Posterior vena cava (tissue), 2 donors: ENCODE measurements at regions of chr20 and their contacts with region 1.

Region 1: GRCh38 chr20:48473838-48474416 is 353.9 kb downstream of the PREX1 start:
- DNase-seq: peak; percentile 63

Region 2: DNA sequence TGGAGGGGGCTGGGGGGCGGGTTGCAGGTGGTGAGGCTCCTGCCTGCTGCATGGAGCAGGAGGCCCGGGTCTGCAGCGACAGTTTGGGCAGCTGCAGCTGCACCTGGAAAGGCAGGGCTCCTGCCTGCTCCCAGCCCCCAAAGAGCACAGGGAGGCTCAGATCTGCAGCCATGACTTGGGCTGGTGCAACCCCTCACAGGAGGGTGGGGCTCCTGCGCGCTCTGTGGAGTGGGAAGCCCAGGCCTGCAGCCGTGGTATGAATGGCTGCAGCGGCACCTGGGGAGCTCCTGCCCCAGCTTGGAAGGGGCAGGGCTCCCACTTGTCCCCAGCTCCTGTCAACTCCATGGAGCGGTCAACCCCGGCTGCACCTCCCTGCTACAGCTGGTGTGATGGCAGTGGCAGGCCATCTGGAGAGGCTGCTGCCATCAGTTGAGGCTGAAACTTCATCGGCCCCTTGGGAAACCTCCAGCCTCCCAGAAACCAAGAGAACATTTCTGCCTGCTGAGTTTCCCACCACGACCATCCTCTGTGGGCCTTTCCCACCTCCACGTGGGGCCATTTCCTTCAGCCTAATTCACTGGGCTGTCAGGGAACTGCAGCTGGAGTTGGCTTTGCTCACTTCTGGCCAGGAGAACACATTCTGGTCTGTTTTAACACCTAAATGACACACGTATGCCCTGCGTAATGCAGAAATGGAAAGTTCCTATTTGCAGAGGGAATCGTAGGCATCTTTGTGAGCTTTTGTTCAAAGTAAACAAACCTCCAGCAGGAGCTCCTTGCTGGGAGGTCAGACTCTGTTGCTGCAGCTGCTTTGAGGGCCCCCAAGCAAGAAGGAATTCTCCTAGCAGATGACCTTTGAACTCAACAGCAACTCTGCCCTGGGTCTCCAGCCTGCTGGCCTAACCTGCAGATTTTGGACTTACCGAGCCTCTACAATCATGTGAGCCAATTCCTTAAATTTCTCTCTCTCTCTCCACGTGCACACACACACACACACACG is 75.1 kb before region 1 on chr20:
- intact Hi-C with region 1: no loop called
- DNase-seq: no peak

Region 3: DNA sequence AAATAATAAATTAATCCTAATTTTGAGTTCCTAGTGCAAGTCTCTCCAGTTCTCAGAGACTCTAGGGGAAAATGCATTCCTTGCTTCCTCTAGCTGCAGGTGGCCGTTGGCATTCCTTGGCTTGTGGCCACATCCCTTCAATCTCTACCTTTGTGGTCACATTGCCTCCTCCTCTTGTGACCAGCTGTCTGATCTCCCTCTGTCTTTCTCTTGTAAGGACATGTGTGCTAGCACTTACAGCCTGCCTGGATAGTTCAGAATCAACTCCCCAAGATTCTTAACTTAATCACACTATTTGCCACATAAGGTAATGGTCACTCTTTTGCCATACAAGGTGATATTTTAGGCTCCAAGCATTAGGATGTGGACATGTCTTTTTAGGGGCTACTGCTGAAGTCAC is 35.8 kb before region 1 on chr20:
- intact Hi-C with region 1: loop called in 1 of 2 experiments (anchors 2 kb)
- DNase-seq: no peak